ENCODE measurements at regions of chr7 and their contacts with region 1.

Region 1: GRCh38 chr7:106056513-106057203 is 55.5 kb downstream of the SYPL1 start:
- DNase-seq: peak in 4 of 6 donors; percentile 41 to 72 (median 65)
- ATAC-seq: peak; percentile 79 to 93 (median 93)
- H3K4me3 ChIP-seq: no peak overlapping the region
- H3K27ac ChIP-seq: no peak overlapping the region
- H3K4me1 ChIP-seq: peaks cover 0 to 7% (median 0%) of the 10 kb centered on the region in 3 donors
- H3K27me3 ChIP-seq: no peaks in the 10 kb centered on the region
- CTCF ChIP-seq: peak; percentile 56 to 81 (median 70)

Region 2: DNA sequence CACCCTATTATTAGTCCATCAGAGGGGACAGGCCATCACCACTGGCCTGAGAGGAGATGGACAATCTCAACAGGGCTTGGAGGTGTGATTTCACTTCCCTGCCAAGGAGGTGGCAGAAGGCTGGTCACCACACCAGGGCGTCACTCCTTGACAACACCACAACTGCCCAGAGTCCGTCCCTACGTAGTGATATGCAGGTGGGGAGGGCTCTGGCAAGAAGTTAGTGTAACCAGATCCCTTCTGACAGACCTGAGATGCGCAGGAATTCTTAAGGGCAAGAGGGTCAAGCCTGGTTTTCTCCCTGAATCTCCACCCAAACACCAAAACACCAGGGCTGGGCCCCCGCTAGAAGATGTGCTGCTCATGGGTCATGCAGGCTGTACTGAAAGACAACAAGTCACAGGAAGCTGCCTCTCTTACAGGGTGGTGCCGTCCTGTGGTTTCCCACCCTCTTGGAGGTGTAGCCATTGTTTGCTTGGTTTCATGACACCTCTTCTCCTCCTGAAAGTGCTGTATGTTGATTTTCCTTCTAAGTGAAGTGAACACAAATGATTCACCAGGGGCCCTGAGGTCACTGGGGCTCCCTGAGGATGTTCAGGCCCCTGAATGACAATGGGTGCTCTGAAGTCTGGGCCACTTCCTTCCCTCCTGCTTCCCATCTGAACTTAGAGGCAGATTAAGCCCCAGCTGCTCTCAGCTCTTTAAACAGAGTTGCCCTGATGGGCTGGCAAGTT is 207.4 kb before region 1 on chr7:
- intact Hi-C with region 1: no loop called
- DNase-seq: no peak
- ATAC-seq: no peak
- H3K4me3 ChIP-seq: no peak overlapping the region
- H3K27ac ChIP-seq: no peak overlapping the region
- H3K4me1 ChIP-seq: no peaks in the 10 kb centered on the region
- H3K27me3 ChIP-seq: no peaks in the 10 kb centered on the region
- CTCF ChIP-seq: no peak

Region 3: DNA sequence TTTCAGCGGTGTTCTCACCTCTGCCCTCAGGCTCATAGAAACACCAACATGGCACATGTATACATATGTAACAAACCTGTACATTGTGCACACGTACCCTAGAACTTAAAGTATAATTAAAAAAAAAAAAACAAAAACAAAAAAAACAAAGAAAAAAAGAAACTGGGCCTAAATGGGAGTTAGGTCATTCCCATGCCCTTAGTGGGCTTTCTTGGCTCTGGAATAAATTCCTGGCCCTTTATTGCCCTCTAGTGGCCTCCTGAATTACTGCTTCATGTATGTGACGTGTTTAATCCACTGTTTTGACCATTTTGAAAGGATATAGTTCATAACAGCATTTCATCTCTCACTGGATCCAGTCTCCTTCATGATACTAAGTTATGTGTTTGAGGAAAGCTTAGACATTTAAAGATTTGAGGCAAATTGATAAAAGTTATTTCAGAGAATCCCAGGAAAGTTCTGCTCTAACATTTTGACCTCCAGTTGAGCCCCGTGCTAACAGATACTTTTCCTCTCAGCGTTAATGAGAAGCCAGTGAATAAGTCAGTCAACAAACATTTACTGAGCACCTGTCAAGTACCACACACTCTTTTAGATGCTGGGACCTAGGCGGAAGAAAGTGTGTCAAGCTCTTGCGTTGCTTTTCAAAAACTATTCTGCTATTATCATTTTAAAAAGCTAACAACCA is 110.1 kb after region 1 on chr7:
- intact Hi-C with region 1: loop called in 1 of 3 experiments (anchors 5 kb)
- DNase-seq: peak in 3 of 6 donors; percentile 39 to 57 (median 45)
- ATAC-seq: peak; percentile 76 to 97 (median 88)
- H3K4me3 ChIP-seq: no peak overlapping the region
- H3K27ac ChIP-seq: no peak overlapping the region
- H3K4me1 ChIP-seq: no peaks in the 10 kb centered on the region
- H3K27me3 ChIP-seq: no peaks in the 10 kb centered on the region
- CTCF ChIP-seq: peak; percentile 63 to 82 (median 78)

Measured in pancreas (tissue), 10 donors.